ENCODE measurements at regions of chr10 and their contacts with region 1.

Region 1: GRCh38 chr10:63157845-63158624 is 24.9 kb downstream of the NRBF2 start:
- DNase-seq: peak; percentile 70
- H3K4me3 Mint-ChIP-seq: no peak overlapping the region
- H3K27ac Mint-ChIP-seq: no peak overlapping the region
- H3K4me1 Mint-ChIP-seq: peaks cover 22% of the 10 kb centered on the region
- H3K27me3 Mint-ChIP-seq: no peaks in the 10 kb centered on the region

Region 2: GRCh38 chr10:63042256-63042655 is 115.8 kb before region 1 on chr10:
- CTCF ChIA-PET with region 1: no interaction called
- POLR2A ChIA-PET with region 1: no interaction called
- DNase-seq: no peak
- H3K4me3 Mint-ChIP-seq: no peak overlapping the region
- H3K27ac Mint-ChIP-seq: no peak overlapping the region
- H3K4me1 Mint-ChIP-seq: no peaks in the 10 kb centered on the region
- H3K27me3 Mint-ChIP-seq: peaks cover 32% of the 10 kb centered on the region

Region 3: DNA sequence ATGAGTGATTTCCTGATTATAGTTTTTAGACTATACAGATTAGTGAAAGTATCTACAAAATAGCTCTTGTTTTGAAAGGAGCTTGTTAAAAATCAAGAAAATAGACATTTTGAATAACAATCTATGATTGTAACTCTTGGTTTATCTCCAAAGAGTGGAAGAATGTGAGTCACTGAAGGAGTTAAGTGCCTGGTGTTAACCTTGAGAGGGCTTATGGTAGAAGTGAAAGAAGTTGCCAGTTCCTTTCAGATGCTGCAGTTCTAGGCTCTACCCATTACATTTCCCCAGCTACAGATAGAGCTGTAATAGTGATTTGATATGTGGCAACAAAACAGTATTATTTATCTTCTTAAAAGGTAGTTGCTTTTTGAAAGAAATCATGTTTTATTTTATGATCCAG is 12.3 kb before region 1 on chr10:
- CTCF ChIA-PET with region 1: interaction called, 16 read pairs
- POLR2A ChIA-PET with region 1: no interaction called
- DNase-seq: no peak
- H3K4me3 Mint-ChIP-seq: no peak overlapping the region
- H3K27ac Mint-ChIP-seq: no peak overlapping the region
- H3K4me1 Mint-ChIP-seq: peaks cover 27% of the 10 kb centered on the region
- H3K27me3 Mint-ChIP-seq: no peaks in the 10 kb centered on the region